Posterior cingulate gyrus (tissue), 11 donors: ENCODE measurements at regions of chr6 and their contacts with region 1.

Region 1: DNA sequence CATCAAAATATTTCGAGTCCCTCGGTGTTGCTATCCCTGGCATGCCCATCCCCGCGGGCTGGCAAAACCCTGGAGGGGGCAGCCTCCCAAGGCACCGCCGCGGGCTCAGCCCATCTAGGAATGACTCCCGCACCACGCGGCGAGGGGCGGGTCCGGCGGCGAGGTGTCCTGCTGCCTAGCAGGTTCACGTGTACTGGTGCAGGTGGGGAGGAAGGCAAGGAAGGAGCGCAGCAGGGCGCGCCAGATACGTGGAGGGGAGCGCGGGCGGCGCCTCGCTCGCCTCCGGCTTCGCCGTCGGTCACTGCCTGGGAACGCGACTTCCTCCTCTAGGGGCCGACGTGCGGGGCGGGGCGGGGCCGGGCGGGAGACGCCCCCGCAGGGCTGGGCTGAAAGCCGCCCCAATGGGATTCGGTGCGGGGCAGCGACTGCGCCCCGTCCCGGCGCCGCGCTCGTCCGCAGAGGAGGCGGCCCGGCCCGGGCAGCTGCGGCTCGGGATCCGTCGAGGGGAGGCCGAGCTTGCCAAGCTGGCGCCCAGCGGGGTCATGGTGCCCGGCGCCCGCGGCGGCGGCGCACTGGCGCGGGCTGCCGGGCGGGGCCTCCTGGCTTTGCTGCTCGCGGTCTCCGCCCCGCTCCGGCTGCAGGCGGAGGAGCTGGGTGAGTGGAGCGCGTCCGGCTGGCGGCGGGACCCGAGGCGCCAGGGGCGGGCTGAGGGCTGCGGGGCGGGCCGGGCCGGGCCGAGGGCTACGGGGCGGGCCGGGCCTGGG is at the start of gene DCBLD1:
- DNase-seq: peak; percentile 29 to 93 (median 50)

Region 2: GRCh38 chr6:117547688-117548621 is 65.5 kb after region 1 on chr6:
- intact Hi-C with region 1: loop called (anchors 5 kb)
- DNase-seq: peak; percentile 29 to 94 (median 62)

Region 3: GRCh38 chr6:117555882-117556498 is 73.6 kb after region 1 on chr6:
- intact Hi-C with region 1: loop called (anchors 1 kb)
- DNase-seq: peak in 3 of 10 donors; percentile 38 to 53 (median 48)

Region 4: DNA sequence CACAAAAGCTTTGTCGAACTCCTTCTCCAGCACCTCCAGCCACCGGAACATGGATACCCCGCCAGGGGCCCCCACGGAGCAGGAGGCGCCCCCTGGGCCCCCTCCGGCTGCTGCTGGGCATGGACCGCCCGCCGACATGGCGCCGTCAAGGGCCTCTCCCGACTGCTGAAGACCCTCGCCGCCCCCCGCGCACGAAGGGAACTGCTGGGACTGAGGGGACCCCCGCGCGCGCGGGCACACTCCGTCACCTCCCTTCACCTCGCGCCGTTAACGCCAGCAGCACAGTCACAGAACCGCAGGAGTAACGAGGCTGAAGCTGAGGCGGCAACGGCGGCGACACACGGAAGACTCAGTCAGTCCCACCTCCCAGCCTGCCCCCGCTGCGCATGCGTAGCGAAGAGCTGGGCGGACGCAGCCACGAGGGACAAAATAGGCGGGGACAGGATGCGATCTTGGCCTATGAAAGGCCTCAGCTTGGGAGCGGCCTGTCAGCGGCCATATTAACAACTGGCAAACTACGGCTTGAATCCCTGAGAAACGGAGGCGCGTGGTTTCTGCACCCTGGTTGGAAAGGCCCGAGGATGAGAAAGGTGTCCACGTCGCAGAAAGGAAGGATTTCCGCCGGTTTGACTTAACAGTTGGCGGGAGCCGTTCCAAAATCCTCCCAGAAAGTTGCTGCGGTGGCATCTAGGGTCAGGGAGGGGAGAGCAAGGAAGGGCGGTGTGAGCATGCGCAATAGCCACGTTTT is 119.9 kb after region 1 on chr6 and contains the start of gene GOPC:
- intact Hi-C with region 1: loop called (anchors 5 kb)
- DNase-seq: peak; percentile 94 to 99 (median 96)